ENCODE measurements at regions of chr12 and their contacts with region 1.

Region 1: GRCh38 chr12:92570056-92570753 is 132.6 kb upstream of the PLEKHG7 start:
- DNase-seq: peak; percentile 35
- ATAC-seq: peak; percentile 78 to 80

Region 2: GRCh38 chr12:91382081-91382543 is 1188.1 kb before region 1 on chr12:
- intact Hi-C with region 1: loop called in 1 of 2 experiments (anchors 5 kb)
- DNase-seq: peak; percentile 87
- ATAC-seq: peak; percentile 85 to 88

Region 3: DNA sequence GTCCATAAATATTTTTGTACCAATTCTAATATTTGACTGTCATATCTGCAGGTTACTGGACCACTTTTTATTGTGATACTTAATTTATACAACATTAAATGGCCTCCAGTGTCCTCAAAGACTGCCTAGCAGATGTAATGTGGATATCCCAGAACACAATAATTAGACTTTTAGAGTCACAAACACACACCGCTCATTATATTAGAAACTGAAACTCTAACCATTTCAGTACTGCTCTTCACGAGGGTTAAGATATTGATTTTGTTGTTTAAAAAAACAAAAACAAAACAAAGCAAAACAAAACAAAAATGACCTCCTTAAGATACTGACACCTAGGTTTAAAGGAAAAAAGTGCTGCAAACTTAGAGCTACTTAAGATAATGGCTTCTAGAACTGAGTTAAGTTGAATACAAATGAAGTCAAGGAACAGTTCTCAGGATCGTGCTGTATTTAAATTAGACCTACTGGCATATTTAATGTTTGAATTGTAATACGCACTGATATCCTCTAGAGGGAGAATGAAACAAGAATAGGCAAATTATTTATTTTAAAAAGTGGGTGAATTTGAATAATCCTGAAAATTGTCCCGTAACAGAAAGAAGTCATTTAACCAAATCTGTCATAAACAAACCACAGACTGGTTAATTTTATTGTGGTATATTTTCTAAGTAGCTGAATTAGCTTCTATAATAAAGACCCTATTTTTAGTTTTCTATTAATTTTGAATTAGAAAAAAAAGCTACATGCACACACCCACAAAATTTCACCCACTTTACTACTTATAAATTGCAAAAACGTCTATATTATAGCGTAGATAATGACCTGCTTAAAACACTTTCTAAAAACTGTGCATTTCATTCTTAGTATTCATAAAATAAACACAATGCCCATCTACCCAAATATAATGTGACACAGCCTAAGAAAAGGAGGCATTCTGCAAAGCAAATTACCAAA is 992.3 kb before region 1 on chr12:
- intact Hi-C with region 1: loop called in 1 of 2 experiments (anchors 5 kb)
- DNase-seq: no peak
- ATAC-seq: peak; percentile 47 to 51

Region 4: DNA sequence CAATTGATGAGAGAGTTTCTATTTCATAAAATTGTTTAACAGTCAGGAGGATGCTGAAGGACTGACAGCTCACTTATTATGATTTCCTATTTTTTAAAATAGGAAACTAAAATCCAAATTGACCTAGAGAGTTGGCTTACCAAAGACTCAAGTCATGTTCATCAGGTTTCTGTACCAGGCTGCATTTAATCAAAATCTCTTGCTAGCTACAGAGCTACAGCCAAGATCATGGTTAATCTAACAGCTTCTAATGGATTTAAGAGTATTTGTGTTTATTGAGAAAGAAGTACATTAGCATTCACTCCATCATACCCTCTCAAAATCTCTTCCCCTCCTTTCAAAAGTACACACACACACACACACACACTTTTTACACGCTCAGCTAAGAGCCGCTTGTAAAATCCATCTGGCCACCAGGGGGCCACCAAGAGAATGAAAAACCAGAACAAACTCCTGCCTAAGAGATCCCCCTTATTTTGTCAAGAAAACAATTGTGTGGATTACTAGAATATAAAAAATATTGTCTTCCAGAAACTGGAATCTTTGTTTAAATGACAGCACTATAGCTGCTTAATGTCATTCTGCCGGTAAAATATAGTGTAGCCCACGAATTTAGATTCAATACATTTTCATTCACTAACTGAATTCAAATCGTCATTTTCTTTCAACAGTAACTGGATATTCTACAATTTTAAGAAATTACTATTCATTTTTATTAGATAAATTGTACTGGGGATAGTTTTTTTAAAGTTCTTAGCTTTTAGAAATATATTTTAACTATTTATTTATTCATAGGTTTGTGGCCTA is 758.5 kb before region 1 on chr12:
- intact Hi-C with region 1: loop called in 1 of 2 experiments (anchors 10 kb)
- DNase-seq: peak; percentile 75
- ATAC-seq: peak; percentile 64 to 86

Region 5: DNA sequence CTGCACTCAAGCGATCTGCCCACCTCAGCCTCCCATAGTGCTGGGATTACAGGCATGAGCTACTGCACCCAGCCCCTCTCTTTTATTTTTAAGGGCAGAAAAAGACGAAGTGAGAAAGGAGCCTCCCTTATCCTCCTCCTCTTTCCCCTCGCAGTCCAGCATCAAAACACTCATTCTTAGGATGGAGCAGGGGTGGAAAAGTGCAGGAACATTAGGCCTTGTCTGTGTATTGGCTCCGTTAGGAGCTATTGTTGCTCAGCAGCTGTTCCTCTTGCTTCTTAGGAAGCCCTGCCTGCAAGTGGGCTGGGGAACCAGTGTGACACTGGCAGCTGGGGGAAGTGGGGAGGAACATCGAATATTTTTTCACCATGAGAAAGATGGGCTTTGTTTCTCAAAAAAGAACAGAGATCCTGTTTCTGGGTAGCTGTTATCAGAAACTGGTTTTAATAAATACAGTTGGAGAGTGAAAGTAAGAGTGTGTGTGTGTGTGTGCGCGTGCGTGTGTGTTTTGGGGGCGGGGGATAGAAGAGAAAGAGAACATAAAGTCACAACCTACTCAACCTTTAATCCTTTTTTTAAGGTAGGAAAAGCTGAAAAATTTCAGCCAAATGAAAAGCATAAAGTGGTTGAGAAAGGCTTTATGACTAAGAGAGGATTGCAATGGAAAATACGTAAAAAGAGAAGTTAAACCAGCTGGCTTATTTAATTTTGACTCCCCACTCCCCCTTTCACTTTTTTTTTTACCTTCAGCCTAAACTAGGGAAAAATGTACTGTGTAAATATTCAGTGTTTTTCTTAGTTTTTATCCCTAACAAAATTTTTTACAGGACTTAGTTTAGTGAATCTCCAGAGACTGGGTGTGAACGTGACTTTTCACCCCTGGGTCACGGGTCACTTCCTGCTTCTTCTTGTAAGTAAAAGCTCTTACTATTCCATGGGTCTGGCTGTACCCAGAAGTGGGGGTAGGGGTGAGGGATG is 64.7 kb before region 1 on chr12:
- intact Hi-C with region 1: loop called (anchors 5 to 10 kb)
- DNase-seq: peak; percentile 67
- ATAC-seq: peak; percentile 54 to 76

Region 6: DNA sequence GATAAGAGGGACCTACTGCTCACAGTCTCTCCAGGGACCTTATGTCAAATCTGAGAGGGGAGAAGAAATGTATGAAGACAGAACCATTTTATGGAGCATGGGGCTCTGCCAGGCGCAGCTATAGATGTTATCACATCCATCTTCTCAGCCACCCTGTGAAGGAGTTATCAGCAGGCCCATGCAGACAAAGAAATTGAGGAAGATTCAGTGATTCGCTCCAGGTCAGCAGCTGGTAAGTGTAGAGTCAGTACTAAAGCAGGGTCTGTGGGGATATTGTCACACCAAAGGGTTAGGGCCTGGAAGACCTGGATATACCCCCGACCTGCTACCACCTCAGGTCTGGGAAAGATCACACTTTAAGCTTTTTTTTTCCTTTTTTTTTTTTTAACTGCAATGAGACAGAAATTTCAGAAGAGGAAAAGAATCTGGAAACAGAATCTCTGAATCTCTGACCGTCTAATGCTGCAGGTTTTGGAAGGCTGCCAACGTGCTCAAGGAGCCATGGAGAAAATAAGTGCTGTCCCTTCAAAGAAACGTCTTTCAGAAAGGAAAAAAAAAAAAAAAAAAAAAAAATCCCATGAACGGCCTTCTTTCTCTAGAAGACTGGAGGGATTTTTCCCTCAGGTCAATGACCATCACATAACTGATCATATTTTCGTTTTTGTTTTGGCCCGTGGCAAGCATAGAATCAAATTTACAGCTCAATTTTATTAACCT is 59.3 kb after region 1 on chr12:
- intact Hi-C with region 1: no loop called
- DNase-seq: no peak
- ATAC-seq: no peak

Region 7: DNA sequence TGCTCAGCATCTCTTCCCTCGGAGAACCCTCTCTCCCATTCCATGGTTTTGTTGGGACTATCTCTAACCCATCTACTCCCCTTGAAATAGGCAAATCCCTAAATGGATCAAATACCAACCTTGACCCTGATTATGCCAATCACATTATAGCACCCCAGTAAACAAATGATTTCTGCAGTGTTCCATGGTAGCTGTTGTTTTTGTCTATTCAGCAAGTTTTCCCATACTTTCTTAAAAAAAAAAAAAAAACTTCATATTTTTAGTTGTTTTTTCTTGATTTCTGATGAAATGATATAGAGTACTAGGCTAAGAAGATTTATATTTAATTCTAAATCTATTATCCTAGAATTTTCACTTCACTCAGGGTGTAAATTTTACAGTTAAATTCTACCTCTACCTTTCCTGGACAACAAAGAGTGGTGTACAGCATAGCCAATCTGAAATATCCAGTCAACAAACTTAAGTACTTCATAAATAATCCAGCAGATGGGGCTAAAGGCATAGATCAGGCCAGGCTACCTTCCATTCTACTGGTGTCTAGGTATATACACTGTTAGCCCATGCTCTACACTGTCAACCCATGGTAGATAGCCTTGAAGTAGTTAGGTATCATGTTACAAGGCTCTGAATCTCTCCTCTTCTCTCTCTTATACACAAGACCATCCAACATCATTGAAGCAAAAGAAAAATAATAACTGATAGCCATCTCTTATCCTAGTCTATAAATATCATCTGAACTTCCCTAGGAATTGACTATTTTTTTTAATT is 214.8 kb after region 1 on chr12:
- intact Hi-C with region 1: no loop called
- DNase-seq: no peak
- ATAC-seq: peak; percentile 94 to 96

Region 8: DNA sequence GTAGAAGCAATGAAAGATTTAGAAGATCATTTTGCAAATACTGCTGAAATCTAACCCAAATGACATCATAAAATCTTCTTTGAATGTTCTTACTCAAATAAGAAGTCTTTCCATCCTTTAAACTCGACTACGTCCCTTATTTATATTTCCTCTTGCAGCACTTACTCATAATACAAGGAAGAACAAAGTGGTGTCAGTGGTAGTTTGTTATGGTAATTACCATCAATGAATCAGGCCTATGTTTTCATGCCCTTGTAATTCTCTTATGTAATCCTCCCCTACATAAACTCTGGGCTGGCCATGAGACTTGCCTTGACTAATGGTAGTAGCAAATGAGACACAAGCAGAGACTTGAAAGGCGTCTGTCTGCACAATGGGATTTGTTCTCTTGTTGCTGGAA is 341.8 kb after region 1 on chr12:
- intact Hi-C with region 1: no loop called
- DNase-seq: no peak
- ATAC-seq: peak in 1 of 2 donors; percentile 44